HEK293 (cell line): ENCODE measurements at regions of chr11 and their contacts with region 1.

Region 1: GRCh38 chr11:1572197-1573076 is at the start of gene DUSP8:
- H3K4me3 ChIP-seq: peak within 1 kb of the TSS; percentile 75
- H3K27ac ChIP-seq: peak within 1 kb of the TSS; percentile 53; the same call in 1 of the 2 replicates
- H3K4me1 ChIP-seq: no peaks in the 10 kb centered on the region; the same call in 1 of the 2 replicates
- CTCF ChIP-seq: no peak

Region 2: DNA sequence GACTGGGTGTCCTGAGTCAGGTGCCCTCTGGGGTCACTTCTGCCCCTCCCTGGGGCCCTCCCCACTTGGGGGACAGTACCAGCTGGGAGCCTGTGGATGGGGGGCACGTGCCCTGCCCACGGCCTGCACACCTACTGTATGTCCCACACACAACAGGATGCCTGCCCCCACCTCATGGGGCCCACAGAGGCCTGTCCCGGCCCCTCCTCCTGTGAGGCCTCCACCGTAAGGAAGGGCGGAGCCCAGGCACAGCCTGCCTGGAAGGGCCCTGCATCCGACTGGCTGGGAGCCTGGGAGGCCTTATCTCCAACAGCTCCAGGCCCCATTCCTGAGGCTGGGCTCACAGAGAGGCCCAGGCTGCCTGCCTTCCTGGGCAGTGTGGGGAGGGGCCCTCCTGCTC is 134.9 kb before region 1 on chr11:
- CTCF ChIA-PET with region 1: no interaction called
- POLR2A ChIA-PET with region 1: no interaction called
- H3K4me3 ChIP-seq: no peak overlapping the region
- H3K27ac ChIP-seq: no peak overlapping the region
- H3K4me1 ChIP-seq: no peaks in the 10 kb centered on the region
- CTCF ChIP-seq: no peak

Region 3: GRCh38 chr11:1515082-1516060 is 57.1 kb before region 1 on chr11:
- CTCF ChIA-PET with region 1: interaction called, 10 read pairs
- POLR2A ChIA-PET with region 1: no interaction called
- H3K4me3 ChIP-seq: no peak overlapping the region
- H3K27ac ChIP-seq: no peak overlapping the region
- H3K4me1 ChIP-seq: no peaks in the 10 kb centered on the region
- CTCF ChIP-seq: peak; percentile 80

Region 4: GRCh38 chr11:1541474-1542204 is 30.8 kb before region 1 on chr11:
- CTCF ChIA-PET with region 1: interaction called, 138 read pairs
- POLR2A ChIA-PET with region 1: interaction called, 24 read pairs
- H3K4me3 ChIP-seq: no peak overlapping the region
- H3K27ac ChIP-seq: no peak overlapping the region
- H3K4me1 ChIP-seq: no peaks in the 10 kb centered on the region
- CTCF ChIP-seq: no peak

Region 5: GRCh38 chr11:1553808-1554594 is 18.4 kb before region 1 on chr11:
- CTCF ChIA-PET with region 1: interaction called, 19 read pairs
- POLR2A ChIA-PET with region 1: interaction called, 8 read pairs
- H3K4me3 ChIP-seq: no peak overlapping the region
- H3K27ac ChIP-seq: no peak overlapping the region
- H3K4me1 ChIP-seq: no peaks in the 10 kb centered on the region
- CTCF ChIP-seq: no peak

Region 6: GRCh38 chr11:1598816-1599215 is 26.4 kb after region 1 on chr11:
- CTCF ChIA-PET with region 1: interaction called, 22 read pairs
- POLR2A ChIA-PET with region 1: no interaction called
- H3K4me3 ChIP-seq: no peak overlapping the region
- H3K27ac ChIP-seq: no peak overlapping the region
- H3K4me1 ChIP-seq: no peaks in the 10 kb centered on the region
- CTCF ChIP-seq: no peak

Region 7: DNA sequence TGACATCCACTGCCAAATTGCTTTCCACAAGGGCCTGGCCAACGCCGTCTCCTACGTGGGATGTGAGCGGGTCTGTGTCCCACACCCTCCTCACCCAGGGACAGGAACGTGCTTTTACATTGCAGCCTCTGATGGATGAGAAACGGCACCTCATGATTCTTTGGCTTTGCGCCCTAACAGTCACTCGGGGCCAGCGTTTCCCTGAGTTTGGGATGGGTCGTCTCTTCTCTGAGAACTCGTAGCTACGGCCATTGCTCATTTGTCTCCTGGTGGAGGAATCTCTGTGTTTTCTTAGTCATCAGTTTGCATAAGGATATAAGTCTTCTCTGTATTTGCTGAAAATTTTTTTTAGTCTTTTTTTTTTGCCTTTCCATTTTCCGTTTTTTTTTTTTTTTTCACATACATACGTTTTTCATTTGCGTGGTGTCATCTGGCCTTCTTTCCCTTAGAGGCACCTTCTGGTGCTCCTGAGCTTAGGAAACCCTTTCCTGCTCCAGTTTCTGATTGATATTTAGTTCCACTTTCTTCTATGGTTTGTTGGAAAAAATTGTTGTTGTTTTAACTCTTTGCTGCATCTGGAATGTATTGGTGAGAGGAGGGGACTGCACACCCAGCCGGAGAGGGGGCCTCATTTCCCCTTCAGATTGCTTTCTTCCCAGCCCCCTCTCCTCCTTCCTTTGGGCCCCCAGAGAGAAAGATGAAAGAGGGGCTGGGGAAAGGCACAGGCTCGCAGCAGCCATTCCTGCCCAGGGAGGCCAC is 359.1 kb after region 1 on chr11:
- CTCF ChIA-PET with region 1: no interaction called
- POLR2A ChIA-PET with region 1: no interaction called
- H3K4me3 ChIP-seq: no peak overlapping the region
- H3K27ac ChIP-seq: no peak overlapping the region
- H3K4me1 ChIP-seq: no peaks in the 10 kb centered on the region
- CTCF ChIP-seq: no peak